Aorta (tissue), 5 donors: ENCODE measurements at regions of chr1 and their contacts with region 1.

Region 1: GRCh38 chr1:162878000-162878596 is 17.1 kb upstream of the CCDC190 start:
- DNase-seq: peak; percentile 67 to 77
- ATAC-seq: peak; percentile 80
- H3K4me3 ChIP-seq: no peak overlapping the region
- H3K27ac ChIP-seq: no peak overlapping the region
- H3K4me1 ChIP-seq: peaks cover 0 to 1% of the 10 kb centered on the region in 2 donors
- H3K27me3 ChIP-seq: no peaks in the 10 kb centered on the region

Region 2: DNA sequence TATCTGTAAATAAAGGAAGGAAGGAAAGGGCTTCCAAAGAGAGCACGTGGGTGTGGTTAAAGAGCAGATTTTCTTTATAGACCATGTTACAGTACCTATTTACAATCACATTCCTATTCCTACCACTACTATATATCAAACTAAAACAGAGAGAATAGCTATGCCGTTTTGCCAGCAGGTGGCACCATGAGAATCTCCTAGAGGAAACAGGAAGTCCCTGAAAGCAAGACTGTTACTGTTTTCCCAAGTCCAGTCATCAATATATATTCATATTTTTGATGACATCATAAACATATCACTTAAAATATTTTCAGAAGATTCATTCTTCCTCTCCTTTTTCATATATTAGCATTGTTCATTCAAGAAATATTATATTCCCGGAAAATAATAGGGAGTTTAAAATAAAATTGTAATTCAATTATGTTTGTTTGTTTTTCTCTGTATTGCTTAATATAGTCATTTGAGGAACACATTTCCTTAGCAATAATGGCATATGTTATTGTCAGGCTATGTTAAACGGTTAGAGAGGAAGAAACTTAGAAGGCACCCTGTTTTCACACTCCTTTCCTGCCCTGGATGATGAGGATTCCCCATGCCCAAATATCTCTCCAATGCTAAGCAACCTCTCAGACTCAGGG is 23.7 kb before region 1 on chr1:
- intact Hi-C with region 1: loop called in 1 of 2 experiments (anchors 2 kb)
- DNase-seq: peak; percentile 76 to 82
- ATAC-seq: no peak
- H3K4me3 ChIP-seq: no peak overlapping the region
- H3K27ac ChIP-seq: peak overlapping the region in 1 of 2 donors; percentile 73
- H3K4me1 ChIP-seq: peaks cover 10 to 12% of the 10 kb centered on the region in 2 donors
- H3K27me3 ChIP-seq: no peaks in the 10 kb centered on the region

Region 3: GRCh38 chr1:162905174-162906158 is 27.4 kb after region 1 on chr1:
- intact Hi-C with region 1: loop called in 1 of 2 experiments (anchors 2 kb)
- DNase-seq: no peak
- ATAC-seq: no peak
- H3K4me3 ChIP-seq: no peak overlapping the region
- H3K27ac ChIP-seq: peak overlapping the region in 1 of 2 donors; percentile 17
- H3K4me1 ChIP-seq: no peaks in the 10 kb centered on the region
- H3K27me3 ChIP-seq: no peaks in the 10 kb centered on the region

Region 4: DNA sequence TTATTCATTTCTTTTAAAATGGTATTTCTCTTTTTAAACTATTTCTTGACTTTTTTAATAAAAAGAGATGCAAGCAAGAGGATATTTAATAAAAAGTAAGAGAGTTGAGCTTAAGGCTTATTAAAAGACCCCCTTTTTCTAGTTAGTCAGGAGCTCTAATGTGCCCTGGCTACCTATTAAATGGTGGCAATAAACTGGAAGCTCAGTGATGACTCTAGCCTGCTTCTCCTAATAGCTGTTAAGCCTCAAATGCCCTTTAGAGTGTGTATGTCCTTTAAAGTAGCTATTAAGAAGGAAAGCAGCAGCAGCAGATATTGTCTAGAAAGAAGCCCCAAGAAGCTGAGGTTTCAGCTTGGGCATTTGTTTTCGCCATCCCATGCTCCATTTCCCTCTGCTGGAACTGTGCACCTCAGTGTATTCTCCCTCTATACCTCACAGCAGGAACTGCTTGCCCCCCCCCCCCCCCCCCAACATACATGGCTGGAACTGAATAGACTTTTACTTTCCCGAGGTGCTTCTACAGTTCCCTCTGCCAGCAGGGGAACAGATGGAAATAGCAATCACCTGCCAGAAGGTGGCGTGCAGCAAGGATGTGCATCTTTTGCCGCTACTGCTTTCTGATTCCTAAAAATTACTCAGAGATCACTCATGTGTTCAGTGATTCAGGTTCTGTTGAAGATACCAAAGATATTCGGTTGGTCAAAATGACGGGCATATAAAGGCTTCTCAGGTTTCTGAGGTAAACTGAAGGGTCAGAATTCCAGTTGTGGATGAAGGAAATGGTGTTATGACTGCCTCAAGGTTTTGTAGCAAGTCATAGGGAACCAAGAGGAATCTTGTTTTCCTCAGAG is 193.5 kb after region 1 on chr1:
- intact Hi-C with region 1: loop called (anchors 2 to 5 kb)
- DNase-seq: peak; percentile 75 to 86
- ATAC-seq: peak; percentile 55
- H3K4me3 ChIP-seq: peak overlapping the region; percentile 35 to 72
- H3K27ac ChIP-seq: peak overlapping the region; percentile 43 to 67
- H3K4me1 ChIP-seq: peaks cover 4 to 8% of the 10 kb centered on the region in 2 donors
- H3K27me3 ChIP-seq: no peaks in the 10 kb centered on the region

Region 5: GRCh38 chr1:163174524-163175437 is 296.7 kb after region 1 on chr1:
- intact Hi-C with region 1: loop called in 1 of 2 experiments (anchors 5 kb)
- DNase-seq: peak; percentile 85 to 90
- ATAC-seq: peak; percentile 72
- H3K4me3 ChIP-seq: peak overlapping the region in 1 of 2 donors; percentile 69
- H3K27ac ChIP-seq: peak overlapping the region; percentile 90 to 95
- H3K4me1 ChIP-seq: peaks cover 2 to 3% of the 10 kb centered on the region in 2 donors
- H3K27me3 ChIP-seq: no peaks in the 10 kb centered on the region

Region 6: GRCh38 chr1:163321311-163322305 is 443.5 kb after region 1 on chr1 and contains the start of gene NUF2:
- intact Hi-C with region 1: loop called (anchors 2 to 5 kb)
- DNase-seq: peak; percentile 99
- ATAC-seq: peak; percentile 100
- H3K4me3 ChIP-seq: peak within 1 kb of the TSS; percentile 72 to 86
- H3K27ac ChIP-seq: peak within 1 kb of the TSS in 1 of 2 donors; percentile 82
- H3K4me1 ChIP-seq: peaks cover 0 to 3% of the 10 kb centered on the region in 2 donors
- H3K27me3 ChIP-seq: no peaks in the 10 kb centered on the region
- total RNA-seq, gene NUF2: 0.49 to 1.2 TPM